CD8-positive, alpha-beta T cell (primary cell): ENCODE measurements at regions of chr11 and their contacts with region 1.

Region 1: GRCh38 chr11:57567515-57568329 is at the start of gene UBE2L6:
- DNase-seq: peak; percentile 29 to 92 (median 79)
- ATAC-seq: peak; percentile 77
- H3K4me3 ChIP-seq: peak within 1 kb of the TSS; percentile 86
- H3K4me3 Mint-ChIP-seq: peak within 1 kb of the TSS; percentile 100
- H3K27ac ChIP-seq: peak within 1 kb of the TSS; percentile 86 to 87
- H3K27ac Mint-ChIP-seq: peak within 1 kb of the TSS; percentile 99
- H3K4me1 ChIP-seq: peaks cover 20% of the 10 kb centered on the region
- H3K4me1 Mint-ChIP-seq: peaks cover 48% of the 10 kb centered on the region
- H3K27me3 ChIP-seq: no peaks in the 10 kb centered on the region
- H3K27me3 Mint-ChIP-seq: no peaks in the 10 kb centered on the region
- CTCF ChIP-seq: peak; percentile 93
- total RNA-seq, gene UBE2L6: 44.4 to 47.2 TPM

Region 2: DNA sequence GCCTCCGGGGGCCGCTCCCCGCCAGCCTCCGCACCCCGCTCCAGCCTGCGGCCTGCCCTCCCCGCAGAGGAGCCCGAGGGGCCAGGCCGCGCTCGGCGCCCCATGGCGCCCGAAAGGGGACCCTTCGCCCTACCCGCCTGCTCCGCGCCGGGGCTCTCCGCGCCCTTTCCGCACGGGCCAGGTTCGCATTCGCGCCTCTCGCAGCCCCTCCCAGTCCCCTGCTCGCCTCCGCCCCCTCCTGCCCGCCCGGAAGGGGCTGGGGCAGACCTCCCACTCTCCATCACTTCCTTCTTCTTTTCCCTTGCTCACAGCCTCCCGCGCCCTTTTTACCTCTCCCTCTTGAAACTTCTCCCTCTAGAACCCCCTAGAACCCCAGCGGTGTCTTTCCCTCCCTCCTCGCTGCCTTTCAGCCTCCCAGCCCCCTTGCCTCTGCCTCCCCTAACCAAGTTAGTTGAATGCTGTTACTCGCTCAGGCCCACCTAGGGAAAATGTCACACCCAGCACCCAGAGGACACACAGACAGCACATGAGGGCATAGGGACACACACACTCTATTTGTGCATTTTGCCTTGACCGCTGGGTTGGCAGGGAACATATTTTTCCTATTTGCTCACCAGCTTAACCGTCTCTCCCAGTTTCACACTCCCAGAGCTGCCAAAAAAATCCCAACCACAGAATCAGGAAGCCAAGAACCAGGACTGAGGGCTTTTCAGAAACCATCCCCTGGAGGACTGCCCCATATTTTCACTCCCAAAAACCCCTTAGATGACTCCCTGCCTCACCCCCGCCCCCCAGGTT is 140.6 kb before region 1 on chr11 and contains the start of gene SLC43A3:
- CTCF ChIA-PET with region 1: interaction called, 3 read pairs
- POLR2A ChIA-PET with region 1: interaction called, 5 read pairs
- intact Hi-C with region 1: loop called in 1 of 2 experiments (anchors 2 kb)
- DNase-seq: peak in 8 of 9 experiments; percentile 46 to 80 (median 64)
- ATAC-seq: peak; percentile 32
- H3K4me3 ChIP-seq: peak within 1 kb of the TSS; percentile 47 to 63
- H3K4me3 Mint-ChIP-seq: peak within 1 kb of the TSS; percentile 86
- H3K27ac ChIP-seq: peak within 1 kb of the TSS in 1 of 2 experiments; percentile 85
- H3K27ac Mint-ChIP-seq: peak within 1 kb of the TSS; percentile 89
- H3K4me1 ChIP-seq: peaks cover 31% of the 10 kb centered on the region
- H3K4me1 Mint-ChIP-seq: peaks cover 46% of the 10 kb centered on the region
- H3K27me3 ChIP-seq: no peaks in the 10 kb centered on the region
- H3K27me3 Mint-ChIP-seq: no peaks in the 10 kb centered on the region
- CTCF ChIP-seq: no peak
- total RNA-seq, gene SLC43A3: 9.3 to 11.3 TPM

Region 3: DNA sequence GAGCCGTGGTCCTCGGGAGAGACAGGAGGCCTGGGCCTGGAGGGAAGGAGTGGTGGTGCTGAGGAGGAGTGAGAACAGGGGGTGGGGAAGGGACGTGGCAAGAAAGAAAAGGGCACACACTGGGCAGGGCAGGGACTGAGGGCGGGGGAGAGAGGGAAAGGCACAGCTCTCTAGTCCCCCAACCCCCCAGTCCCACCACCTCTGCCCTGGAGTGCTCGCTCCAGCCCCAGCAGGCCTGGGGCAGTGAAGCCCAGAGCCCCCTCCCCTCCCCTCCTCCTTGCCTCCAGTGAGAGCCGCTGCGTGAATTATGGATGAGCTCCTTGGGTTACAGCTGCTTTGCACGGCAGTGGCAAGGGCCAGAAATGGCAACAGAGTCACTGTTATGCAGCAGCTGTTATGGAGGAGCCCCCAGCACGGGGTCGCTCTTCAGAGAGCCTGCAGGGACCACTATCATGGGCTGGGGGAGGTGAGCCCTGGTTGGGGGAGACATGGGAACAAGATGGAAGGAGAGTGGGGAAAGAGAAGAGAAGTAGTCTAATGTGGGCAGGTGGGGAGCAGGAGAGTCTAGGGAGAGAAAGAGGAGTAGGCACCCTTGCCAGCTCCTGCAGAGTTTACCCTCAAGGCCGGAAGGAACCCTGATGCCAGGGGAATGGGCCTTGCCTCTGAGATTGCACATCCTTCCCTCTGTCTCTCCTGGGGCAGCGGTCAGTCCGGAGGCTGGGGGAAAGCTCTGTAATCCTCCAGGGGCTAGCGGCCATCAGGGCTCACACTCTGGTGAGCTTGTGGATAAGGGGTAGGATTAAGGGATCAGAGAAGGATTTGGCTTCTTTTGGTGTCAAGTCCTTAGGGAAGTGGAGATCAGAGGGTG is 103.8 kb before region 1 on chr11:
- CTCF ChIA-PET with region 1: no interaction called
- POLR2A ChIA-PET with region 1: no interaction called
- intact Hi-C with region 1: no loop called
- DNase-seq: no peak
- ATAC-seq: no peak
- H3K4me3 ChIP-seq: no peak overlapping the region
- H3K4me3 Mint-ChIP-seq: no peak overlapping the region
- H3K27ac ChIP-seq: no peak overlapping the region
- H3K27ac Mint-ChIP-seq: no peak overlapping the region
- H3K4me1 ChIP-seq: peaks cover 18% of the 10 kb centered on the region
- H3K4me1 Mint-ChIP-seq: peaks cover 13% of the 10 kb centered on the region
- H3K27me3 ChIP-seq: peaks cover 3 to 20% of the 10 kb centered on the region in 2 experiments
- H3K27me3 Mint-ChIP-seq: peaks cover 9% of the 10 kb centered on the region
- CTCF ChIP-seq: no peak

Region 4: DNA sequence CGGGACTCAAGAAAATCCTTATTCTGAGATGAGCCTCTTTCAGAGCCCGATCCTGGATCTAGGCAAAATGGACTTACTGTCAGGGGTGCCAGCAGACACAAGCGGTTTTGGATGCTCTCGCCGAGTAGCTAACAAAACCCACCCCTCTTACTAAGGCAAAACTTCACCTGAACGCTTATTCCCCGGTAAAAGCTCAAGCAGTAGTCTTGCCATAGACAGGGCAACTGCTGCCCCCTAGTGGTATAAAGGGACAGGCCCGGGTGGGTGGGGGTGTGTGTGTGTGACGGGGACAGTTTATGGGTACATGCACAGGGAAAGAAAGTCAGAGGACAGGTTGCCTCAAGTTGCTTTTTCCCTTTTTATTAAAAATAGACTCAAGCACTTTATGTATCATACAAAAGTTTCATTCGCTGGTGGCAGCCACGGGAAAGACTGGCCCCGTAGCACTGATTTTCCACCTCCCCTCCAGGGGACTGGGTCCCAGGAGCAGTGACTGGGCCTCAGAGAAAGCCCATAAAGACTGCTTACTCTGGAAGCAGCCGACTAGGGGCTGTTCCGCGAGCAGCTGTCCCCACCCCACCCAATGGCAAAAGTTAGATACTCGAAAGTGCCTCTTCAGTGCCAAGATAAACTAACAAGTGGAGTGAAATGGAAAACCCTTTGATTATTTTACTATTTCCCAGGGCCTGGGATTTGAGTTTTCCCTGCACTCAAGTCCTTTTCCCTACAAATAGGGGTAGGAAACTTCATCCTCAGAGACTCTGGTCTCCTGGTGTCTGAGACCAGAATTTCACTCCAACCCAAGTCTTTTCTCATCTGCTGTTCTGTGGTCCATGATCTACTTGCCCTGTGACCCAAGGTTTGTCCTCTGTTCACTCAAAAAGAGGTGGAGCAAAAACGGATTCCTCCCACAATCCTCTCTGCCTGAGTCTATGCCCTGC is 77.3 kb after region 1 on chr11:
- CTCF ChIA-PET with region 1: interaction called, 207 read pairs
- POLR2A ChIA-PET with region 1: interaction called, 7 read pairs
- intact Hi-C with region 1: loop called (anchors 1 kb)
- DNase-seq: peak; percentile 74 to 93 (median 85)
- ATAC-seq: peak; percentile 61
- H3K4me3 ChIP-seq: no peak overlapping the region
- H3K4me3 Mint-ChIP-seq: no peak overlapping the region
- H3K27ac ChIP-seq: no peak overlapping the region
- H3K27ac Mint-ChIP-seq: no peak overlapping the region
- H3K4me1 ChIP-seq: peaks cover 15% of the 10 kb centered on the region
- H3K4me1 Mint-ChIP-seq: peaks cover 34% of the 10 kb centered on the region
- H3K27me3 ChIP-seq: peaks cover 0 to 22% of the 10 kb centered on the region in 2 experiments
- H3K27me3 Mint-ChIP-seq: peaks cover 48% of the 10 kb centered on the region
- CTCF ChIP-seq: peak; percentile 78

Region 5: DNA sequence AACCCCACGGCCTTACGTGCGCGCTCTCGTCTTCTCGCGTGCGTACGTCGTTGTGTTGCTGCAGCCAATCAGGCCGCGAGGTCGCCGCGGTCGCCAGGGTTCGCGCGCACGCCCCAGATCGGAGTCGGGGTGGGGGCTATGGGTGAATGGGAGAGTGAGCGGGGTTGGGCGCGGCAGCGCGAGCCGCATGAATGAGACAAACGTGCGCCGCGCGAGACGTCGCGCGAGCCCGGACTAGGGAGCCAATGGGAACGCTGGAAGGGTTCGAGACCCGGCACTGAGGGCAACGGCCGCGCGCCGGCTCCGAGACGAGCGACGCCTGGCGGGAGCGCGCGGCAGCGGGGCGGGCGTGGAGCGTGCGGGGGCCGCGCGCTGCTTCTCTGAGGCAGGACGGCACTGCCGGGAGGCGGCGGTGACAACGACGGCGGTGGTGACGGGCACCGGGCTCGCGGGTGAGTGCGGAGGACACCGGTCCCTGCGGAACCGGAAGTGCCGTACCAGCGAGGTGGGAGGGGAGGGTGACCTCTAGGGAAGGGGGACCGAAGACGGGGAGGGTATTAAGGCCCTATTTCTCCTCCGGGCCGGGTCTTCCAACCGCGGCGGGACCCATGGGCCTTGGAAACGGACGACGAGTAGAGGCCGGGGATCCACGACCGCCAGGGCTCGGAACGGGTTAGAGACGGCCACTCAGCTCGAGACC is 100.2 kb after region 1 on chr11 and contains the start of gene ZDHHC5:
- CTCF ChIA-PET with region 1: interaction called, 5 read pairs
- POLR2A ChIA-PET with region 1: no interaction called
- intact Hi-C with region 1: loop called (anchors 1 kb)
- DNase-seq: peak; percentile 99 to 100 (median 99)
- ATAC-seq: peak; percentile 85
- H3K4me3 ChIP-seq: peak within 1 kb of the TSS; percentile 83 to 96
- H3K4me3 Mint-ChIP-seq: peak within 1 kb of the TSS; percentile 85
- H3K27ac ChIP-seq: peak within 1 kb of the TSS; percentile 91 to 99
- H3K27ac Mint-ChIP-seq: peak within 1 kb of the TSS; percentile 97
- H3K4me1 ChIP-seq: peaks cover 41% of the 10 kb centered on the region
- H3K4me1 Mint-ChIP-seq: peaks cover 56% of the 10 kb centered on the region
- H3K27me3 ChIP-seq: no peaks in the 10 kb centered on the region
- H3K27me3 Mint-ChIP-seq: no peaks in the 10 kb centered on the region
- CTCF ChIP-seq: peak; percentile 31
- total RNA-seq, gene ZDHHC5: 65.0 to 66.7 TPM

Region 6: DNA sequence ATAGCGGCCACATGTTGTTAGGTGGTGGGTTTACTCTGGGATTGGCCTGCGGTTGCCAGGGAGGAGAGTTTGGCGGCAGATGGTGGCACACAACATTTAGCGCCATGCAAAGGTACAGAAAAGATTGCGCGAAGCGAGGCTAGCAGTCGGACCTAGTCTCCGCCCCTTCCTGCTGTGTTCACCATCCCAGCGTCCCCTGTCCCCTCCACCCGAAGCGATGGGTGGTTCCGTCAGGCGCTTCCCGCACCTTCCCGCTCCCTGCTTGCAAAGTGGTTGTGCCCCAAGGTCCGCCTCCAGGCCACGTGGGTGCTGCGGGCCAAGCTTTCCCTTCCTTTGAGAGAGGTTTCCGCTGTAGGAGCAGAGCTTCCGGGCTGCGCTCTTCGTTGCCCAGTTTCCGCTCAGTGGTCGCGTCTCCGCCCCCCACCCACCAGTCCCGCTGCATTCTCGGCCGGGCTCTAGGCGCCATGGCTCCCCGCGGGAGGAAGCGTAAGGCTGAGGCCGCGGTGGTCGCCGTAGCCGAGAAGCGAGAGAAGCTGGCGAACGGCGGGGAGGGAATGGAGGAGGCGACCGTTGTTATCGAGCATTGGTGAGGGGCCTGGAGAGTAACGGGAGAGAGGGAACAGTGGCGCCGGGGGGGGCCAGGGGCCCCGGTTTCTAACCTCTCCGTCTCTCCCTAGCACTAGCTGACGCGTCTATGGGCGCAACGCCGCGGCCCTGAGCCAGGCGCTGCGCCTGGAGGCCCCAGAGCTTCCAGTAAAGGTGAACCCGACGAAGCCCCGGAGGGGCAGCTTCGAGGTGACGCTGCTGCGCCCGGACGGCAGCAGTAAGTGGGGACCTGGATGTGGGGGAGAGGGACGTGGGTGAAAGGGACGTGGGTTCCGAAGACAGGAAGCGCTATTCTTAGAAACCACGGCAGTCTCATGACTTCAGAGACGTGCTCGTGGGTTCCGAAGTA is 173.7 kb after region 1 on chr11 and contains the start of gene SELENOH:
- CTCF ChIA-PET with region 1: no interaction called
- POLR2A ChIA-PET with region 1: no interaction called
- intact Hi-C with region 1: loop called (anchors 2 kb)
- DNase-seq: peak; percentile 83 to 97 (median 91)
- ATAC-seq: peak; percentile 85
- H3K4me3 ChIP-seq: peak within 1 kb of the TSS; percentile 90 to 97
- H3K4me3 Mint-ChIP-seq: peak within 1 kb of the TSS; percentile 92
- H3K27ac ChIP-seq: peak within 1 kb of the TSS; percentile 97
- H3K27ac Mint-ChIP-seq: peak within 1 kb of the TSS; percentile 98
- H3K4me1 ChIP-seq: peaks cover 34% of the 10 kb centered on the region
- H3K4me1 Mint-ChIP-seq: peaks cover 41% of the 10 kb centered on the region
- H3K27me3 ChIP-seq: no peaks in the 10 kb centered on the region
- H3K27me3 Mint-ChIP-seq: no peaks in the 10 kb centered on the region
- CTCF ChIP-seq: no peak
- total RNA-seq, gene SELENOH: 40.8 to 44.1 TPM

Region 7: GRCh38 chr11:58524232-58525036 is 956.7 kb after region 1 on chr11:
- CTCF ChIA-PET with region 1: no interaction called
- POLR2A ChIA-PET with region 1: no interaction called
- intact Hi-C with region 1: loop called in 1 of 2 experiments (anchors 1 kb)
- DNase-seq: peak in 8 of 9 experiments; percentile 17 to 85 (median 54)
- ATAC-seq: peak; percentile 71
- H3K4me3 ChIP-seq: peak overlapping the region in 1 of 2 experiments; percentile 24
- H3K4me3 Mint-ChIP-seq: peak overlapping the region; percentile 75
- H3K27ac ChIP-seq: peak overlapping the region; percentile 75 to 80
- H3K27ac Mint-ChIP-seq: peak overlapping the region; percentile 96
- H3K4me1 ChIP-seq: peaks cover 65% of the 10 kb centered on the region
- H3K4me1 Mint-ChIP-seq: peaks cover 69% of the 10 kb centered on the region
- H3K27me3 ChIP-seq: no peaks in the 10 kb centered on the region
- H3K27me3 Mint-ChIP-seq: no peaks in the 10 kb centered on the region
- CTCF ChIP-seq: peak; percentile 90